OCI-LY7 (cell line): ENCODE measurements at regions of chr12 and their contacts with region 1.

Region 1: DNA sequence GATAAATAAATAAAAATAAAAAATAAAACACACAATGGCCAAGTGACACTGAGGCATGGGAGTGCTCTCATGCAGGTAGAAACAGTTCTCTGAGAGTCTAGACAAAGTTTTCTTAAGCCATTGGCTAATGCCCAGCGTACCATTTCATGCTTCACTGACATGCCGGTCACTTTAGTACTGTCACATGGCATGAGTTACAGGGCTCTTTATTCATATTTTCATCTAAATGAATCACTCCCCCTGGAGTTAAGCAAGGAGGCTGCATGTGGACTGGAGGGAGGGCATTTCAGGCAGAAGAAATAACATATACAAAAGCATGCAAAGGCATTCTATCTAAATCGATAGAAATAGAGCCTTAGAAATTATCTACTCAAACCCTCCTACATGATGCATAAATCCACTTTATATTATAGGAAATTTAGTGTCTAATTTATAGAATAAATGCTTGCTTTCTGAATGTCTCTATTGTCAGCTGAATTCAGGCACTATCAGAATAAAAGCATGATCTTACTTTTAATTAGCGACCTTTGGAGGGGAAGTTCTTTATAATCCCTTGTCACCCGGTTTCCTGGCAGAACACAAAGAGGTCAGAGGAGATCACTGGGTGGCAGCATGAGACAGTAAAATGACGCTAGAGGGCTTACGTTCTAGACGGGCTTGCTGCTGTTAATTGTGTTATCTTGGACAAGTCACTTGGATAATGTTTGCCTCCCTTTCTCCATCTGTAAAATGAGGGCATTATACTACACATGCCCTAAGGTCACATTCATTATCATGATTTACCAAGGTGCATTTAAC is 17.5 kb downstream of the DYRK4 start:
- DNase-seq: peak; percentile 72
- H3K4me3 ChIP-seq: no peak overlapping the region
- H3K27ac ChIP-seq: no peak overlapping the region
- H3K4me1 ChIP-seq: peaks cover 34% of the 10 kb centered on the region
- CTCF ChIP-seq: peak; percentile 84

Region 2: GRCh38 chr12:4293299-4293965 is 286.1 kb before region 1 on chr12:
- CTCF ChIA-PET with region 1: no interaction called
- POLR2A ChIA-PET with region 1: no interaction called
- intact Hi-C with region 1: no loop called
- DNase-seq: no peak
- H3K4me3 ChIP-seq: no peak overlapping the region
- H3K27ac ChIP-seq: no peak overlapping the region
- H3K4me1 ChIP-seq: no peaks in the 10 kb centered on the region
- CTCF ChIP-seq: no peak

Region 3: DNA sequence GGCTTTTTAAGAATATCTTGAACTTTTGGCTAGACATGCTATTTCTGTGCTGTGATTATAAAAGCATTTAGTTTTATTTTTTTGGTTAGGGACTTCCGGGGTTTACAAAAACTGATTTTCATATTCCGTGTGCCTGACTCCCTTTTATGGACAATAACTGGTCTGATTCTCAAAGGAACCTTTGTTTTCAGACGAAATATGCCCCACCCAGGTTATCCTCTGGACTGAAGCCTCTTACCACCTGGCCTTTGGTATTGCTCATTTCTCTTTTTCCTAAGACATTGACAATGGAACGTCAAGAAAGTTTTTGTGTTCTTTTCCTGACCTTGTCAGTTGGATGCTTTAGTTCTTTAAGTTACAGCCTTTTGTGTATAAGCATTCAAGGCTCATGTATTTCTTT is 247.7 kb before region 1 on chr12:
- CTCF ChIA-PET with region 1: no interaction called
- POLR2A ChIA-PET with region 1: no interaction called
- intact Hi-C with region 1: no loop called
- DNase-seq: no peak
- H3K4me3 ChIP-seq: no peak overlapping the region
- H3K27ac ChIP-seq: no peak overlapping the region
- H3K4me1 ChIP-seq: peaks cover 25% of the 10 kb centered on the region
- CTCF ChIP-seq: no peak

Region 4: GRCh38 chr12:4763549-4763948 is 184.0 kb after region 1 on chr12:
- CTCF ChIA-PET with region 1: no interaction called
- POLR2A ChIA-PET with region 1: no interaction called
- intact Hi-C with region 1: loop called (anchors 1 kb)
- DNase-seq: no peak
- H3K4me3 ChIP-seq: no peak overlapping the region
- H3K27ac ChIP-seq: no peak overlapping the region
- H3K4me1 ChIP-seq: no peaks in the 10 kb centered on the region
- CTCF ChIP-seq: no peak

Region 5: GRCh38 chr12:4857472-4858291 is 278.2 kb after region 1 on chr12:
- CTCF ChIA-PET with region 1: no interaction called
- POLR2A ChIA-PET with region 1: no interaction called
- intact Hi-C with region 1: loop called (anchors 5 kb)
- DNase-seq: peak; percentile 77
- H3K4me3 ChIP-seq: no peak overlapping the region
- H3K27ac ChIP-seq: no peak overlapping the region
- H3K4me1 ChIP-seq: peaks cover 15% of the 10 kb centered on the region
- CTCF ChIP-seq: peak; percentile 91